ENCODE measurements at regions of chr5 and their contacts with region 1.

Region 1: DNA sequence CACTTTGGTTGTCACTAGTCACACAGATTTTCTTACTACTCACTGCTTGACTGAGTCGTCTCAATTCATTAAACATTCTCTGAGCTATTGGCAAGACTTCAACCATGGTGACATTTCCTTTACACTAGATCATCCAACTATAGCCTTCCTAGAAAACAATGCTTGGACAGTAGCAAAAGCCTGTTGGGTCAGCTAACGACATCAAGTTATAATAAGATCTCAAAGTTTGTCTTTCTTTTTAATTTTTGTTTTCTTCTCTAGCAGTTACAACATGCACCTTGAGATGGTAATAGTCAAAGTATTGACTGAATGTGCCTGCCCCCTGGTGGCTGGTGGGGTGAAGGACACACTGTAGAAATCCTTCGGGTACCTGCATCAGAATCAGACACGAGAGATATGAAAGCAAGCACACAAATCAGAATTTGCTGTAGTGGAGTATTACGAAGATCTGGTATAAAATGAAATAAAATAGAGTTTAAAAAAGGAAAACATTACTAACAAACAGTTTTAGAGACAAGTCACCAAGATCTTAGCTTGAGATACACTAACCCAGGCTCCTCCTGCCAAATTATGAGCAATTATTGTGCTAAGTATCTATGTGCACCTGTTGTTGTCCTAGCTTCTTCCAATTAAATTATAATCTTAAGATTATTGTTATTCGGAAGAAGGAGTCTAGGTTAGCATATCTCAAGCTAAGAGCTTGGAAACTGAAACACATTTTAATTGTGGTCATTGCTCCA is 81.2 kb downstream of the ARL15 start:
- DNase-seq: peak; percentile 51
- CTCF ChIP-seq: peak; percentile 91

Region 2: DNA sequence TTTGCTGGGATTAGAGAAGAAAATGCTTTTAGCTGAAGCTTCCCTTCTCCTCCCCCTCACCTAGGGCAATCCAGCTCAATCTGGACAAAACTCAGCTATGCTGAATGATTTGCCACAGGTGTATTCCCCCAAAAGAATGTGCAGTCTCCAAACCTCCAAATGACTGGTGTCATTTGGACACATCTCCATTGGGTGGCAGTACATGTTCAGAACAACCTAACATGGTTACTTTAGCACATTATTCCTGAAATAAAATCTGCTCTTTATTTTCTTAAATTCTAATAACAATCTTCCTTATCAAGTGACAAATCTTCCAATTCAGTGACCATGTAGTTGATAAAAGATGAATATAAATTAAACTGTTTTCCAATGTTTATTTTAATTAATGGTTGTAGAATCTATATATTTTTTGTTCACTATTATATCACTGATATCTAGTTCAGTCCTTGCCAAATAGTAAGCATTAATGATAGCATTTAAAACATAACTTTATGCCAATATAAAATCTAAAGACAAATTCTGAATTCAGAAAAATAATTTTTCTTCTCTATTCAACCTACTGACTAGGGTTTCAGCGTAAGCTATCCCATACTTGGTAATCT is 1058.4 kb before region 1 on chr5:
- CTCF ChIA-PET with region 1: interaction called, 18 read pairs
- POLR2A ChIA-PET with region 1: no interaction called
- DNase-seq: peak; percentile 18
- CTCF ChIP-seq: peak; percentile 55

Region 3: DNA sequence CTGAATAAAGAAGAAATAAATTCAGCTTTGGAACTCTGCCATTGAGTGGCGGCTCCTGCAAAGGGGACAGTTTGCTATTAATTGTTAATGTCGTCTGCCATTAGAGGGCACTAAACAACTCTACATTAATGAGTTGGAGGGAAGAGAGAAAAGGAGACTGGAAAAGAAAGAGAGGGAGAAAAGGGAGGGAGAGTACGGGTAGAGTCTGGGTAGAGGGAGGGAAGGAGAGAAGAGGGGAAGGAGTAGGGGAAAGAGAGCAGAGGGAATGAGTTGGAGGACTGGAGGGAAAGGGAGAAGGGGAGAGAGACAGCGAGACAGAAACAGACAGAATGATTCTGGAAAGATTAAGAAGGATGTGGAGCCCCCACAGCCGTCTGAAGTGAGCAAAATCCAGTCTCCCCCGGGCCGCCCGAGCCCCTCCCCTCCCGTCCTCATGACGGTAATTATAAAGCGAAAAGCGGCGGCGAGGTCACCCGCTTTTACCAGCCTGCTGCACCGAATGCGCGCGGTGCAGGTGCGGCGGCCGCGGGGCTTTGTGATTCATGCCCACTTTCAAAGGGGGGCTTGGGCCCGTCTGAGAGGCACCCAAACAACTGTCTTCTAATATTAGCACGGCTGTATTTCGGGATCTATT is 750.7 kb before region 1 on chr5:
- CTCF ChIA-PET with region 1: interaction called, 24 read pairs
- POLR2A ChIA-PET with region 1: no interaction called
- DNase-seq: peak; percentile 29
- CTCF ChIP-seq: peak; percentile 58

Region 4: DNA sequence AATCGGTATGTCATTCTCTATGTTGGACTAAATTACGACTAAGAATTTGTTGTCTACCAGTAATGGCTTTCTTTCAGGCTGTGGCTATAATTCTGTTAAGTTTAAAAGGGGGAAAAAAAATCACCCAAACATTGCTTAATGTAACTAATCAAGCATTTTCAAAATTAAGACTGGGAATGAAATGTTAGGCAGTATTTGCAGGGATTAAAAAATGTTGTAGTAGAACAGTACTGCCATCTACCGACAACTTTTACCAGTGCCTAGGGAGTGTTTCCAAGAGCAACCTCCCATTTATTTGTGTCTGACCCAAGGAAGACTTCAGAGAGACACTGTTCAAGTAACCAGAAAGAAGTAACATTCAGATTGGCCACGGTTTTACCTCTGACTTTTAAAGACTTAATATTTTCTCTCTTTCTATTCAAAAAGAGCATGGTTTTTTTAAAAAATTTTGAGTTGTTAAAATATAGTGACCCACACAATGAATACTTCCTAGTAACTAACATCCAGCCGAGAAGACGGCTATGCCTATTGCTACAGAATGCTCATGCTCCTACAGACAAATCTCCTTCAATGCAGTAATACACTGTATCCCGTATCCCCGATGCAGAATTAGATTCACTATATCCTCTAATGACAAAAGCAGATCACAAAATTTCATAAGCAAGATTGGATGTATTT is 11.2 kb before region 1 on chr5:
- CTCF ChIA-PET with region 1: interaction called, 12 read pairs
- POLR2A ChIA-PET with region 1: no interaction called
- DNase-seq: peak; percentile 22
- CTCF ChIP-seq: peak; percentile 76

Measured in GM10248 (cell line).